ENCODE measurements at regions of chr5 and their contacts with region 1.

Region 1: DNA sequence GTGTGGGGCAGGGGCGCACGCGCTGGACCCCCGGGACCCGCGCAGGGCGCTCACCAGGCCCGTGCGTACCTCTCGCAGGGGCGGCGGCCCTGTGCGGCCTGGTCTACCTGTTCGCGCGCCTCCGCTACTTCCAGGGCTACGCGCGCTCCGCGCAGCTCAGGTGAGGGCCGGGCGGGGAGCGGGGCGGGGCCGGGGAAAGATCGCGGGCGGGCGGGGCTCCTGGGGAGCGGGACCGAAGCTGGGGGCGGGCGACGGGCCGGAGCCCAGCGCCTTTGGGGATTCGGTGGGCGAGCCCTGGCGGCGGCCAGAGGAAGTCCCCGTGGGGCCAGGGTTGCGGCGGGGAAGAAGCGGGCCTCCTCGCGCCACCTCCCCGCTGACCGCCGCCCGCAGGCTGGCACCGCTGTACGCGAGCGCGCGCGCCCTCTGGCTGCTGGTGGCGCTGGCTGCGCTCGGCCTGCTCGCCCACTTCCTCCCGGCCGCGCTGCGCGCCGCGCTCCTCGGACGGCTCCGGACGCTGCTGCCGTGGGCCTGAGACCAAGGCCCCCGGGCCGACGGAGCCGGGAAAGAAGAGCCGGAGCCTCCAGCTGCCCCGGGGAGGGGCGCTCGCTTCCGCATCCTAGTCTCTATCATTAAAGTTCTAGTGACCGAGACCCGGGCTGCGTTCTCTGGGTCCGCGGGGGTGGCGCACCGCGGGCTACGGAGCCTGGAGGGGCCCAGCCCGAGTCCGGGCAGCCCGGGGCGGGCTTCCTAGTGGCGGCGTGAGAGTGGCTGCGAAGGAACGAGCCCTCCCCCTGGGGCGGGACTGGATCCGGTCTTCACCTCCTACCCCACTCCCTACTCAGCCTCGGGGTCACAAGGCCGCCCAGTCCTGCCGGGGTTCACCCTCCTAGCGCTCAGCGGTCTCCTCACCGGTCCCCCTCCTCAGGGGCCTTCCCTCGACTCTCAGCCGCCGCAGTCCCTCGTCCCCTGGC is 2.4 kb downstream of the LTC4S start:
- DNase-seq: peak; percentile 82 to 89
- H3K4me3 ChIP-seq: peak overlapping the region; percentile 61 to 75
- H3K27ac ChIP-seq: peak overlapping the region; percentile 78 to 83
- H3K4me1 ChIP-seq: peaks cover 0 to 50% (median 38%) of the 10 kb centered on the region in 4 donors
- H3K27me3 ChIP-seq: no peaks in the 10 kb centered on the region
- CTCF ChIP-seq: peak; percentile 80 to 84

Region 2: DNA sequence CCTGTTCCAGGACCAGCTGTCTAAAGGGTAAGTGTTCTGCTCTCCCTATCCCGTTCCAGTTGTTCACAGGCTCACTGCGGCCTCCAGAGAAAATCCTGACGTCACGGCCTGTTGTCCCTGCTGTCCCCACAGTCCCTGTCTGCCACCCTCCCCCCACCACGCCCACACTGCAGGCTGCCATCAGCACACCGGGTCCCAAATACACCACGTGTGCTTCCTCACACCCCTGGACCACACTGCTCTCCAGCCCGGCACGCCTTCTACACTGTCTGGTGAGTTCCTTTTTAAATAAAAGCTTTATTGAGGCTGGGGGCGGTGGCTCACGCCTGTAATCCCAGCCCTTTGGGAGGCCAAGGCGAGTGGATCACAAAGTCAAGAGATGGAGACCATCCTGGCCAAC is 334.1 kb before region 1 on chr5:
- intact Hi-C with region 1: no loop called
- DNase-seq: no peak
- H3K4me3 ChIP-seq: no peak overlapping the region
- H3K27ac ChIP-seq: no peak overlapping the region
- H3K4me1 ChIP-seq: no peaks in the 10 kb centered on the region
- H3K27me3 ChIP-seq: peaks cover 0 to 2% of the 10 kb centered on the region in 2 donors
- CTCF ChIP-seq: no peak

Region 3: GRCh38 chr5:179504600-179505396 is 291.4 kb before region 1 on chr5:
- intact Hi-C with region 1: no loop called
- DNase-seq: no peak
- H3K4me3 ChIP-seq: no peak overlapping the region
- H3K27ac ChIP-seq: no peak overlapping the region
- H3K4me1 ChIP-seq: no peaks in the 10 kb centered on the region
- H3K27me3 ChIP-seq: no peaks in the 10 kb centered on the region
- CTCF ChIP-seq: no peak

Region 4: GRCh38 chr5:179763215-179763945 is 32.8 kb before region 1 on chr5:
- intact Hi-C with region 1: loop called (anchors 5 kb)
- DNase-seq: peak; percentile 77 to 78
- H3K4me3 ChIP-seq: no peak overlapping the region
- H3K27ac ChIP-seq: peak overlapping the region; percentile 55 to 70
- H3K4me1 ChIP-seq: peaks cover 0 to 74% (median 55%) of the 10 kb centered on the region in 4 donors
- H3K27me3 ChIP-seq: no peaks in the 10 kb centered on the region
- CTCF ChIP-seq: peak; percentile 81 to 86

Measured in tibial artery (tissue), 4 donors.